GM10248 (cell line): ENCODE measurements at regions of chr17 and their contacts with region 1.

Region 1: GRCh38 chr17:78289802-78290363 is 58.5 kb downstream of the TMEM235 start:
- DNase-seq: peak; percentile 84
- CTCF ChIP-seq: peak; percentile 82

Region 2: DNA sequence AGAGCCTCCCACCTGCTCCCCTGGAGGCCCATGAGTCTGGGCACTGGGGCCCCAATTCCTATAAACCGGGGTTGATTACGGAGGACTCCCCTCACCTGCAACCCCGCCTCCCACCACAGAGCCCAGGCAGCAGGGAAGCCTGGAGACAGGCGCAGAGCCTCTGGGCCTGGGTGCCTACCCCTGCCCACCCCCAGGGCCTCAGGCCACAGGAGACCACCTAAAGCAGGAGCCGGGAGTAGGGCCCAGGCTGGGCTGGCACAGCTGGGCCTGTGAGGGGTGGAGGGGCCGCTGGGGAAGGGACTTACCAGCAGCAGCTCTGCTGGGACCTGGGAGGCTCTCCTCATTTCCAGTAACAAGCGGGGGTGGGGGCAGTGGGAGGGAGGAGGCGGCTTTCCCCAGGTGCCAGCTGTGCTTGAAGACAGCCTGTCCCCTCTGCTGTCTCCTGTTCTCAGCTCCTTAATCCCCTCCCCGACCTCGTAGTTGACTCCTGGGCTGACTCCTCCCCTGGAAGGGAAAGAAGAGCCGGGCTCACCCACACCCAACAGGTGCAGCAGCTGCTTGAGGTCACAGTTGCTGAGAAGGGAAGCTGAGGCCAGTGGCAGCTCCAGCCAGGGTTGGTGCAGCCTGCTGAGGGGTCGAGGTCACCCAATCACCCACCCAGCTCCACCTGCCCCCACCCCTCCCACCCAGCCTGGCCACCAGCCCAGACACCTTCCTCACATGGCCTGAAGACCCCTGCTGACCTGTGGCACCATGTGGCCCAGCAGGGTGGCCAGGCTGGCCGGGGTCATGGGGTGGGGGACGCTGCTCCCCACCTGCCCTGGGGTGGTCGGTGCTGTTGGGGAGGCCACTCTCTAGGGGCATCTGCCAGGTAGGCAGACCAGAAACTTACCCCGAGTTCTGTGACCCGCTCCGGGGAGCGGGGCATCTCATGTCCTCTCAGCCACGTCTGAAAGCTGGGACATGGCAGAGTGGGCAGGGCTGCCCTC is 11.4 kb before region 1 on chr17:
- CTCF ChIA-PET with region 1: interaction called, 10 read pairs
- POLR2A ChIA-PET with region 1: no interaction called
- DNase-seq: no peak
- CTCF ChIP-seq: no peak

Region 3: GRCh38 chr17:78330570-78331224 is 40.8 kb after region 1 on chr17:
- CTCF ChIA-PET with region 1: no interaction called
- POLR2A ChIA-PET with region 1: no interaction called
- DNase-seq: no peak
- CTCF ChIP-seq: no peak